Left lung (tissue), 14 donors: ENCODE measurements at regions of chr1 and their contacts with region 1.

Region 1: DNA sequence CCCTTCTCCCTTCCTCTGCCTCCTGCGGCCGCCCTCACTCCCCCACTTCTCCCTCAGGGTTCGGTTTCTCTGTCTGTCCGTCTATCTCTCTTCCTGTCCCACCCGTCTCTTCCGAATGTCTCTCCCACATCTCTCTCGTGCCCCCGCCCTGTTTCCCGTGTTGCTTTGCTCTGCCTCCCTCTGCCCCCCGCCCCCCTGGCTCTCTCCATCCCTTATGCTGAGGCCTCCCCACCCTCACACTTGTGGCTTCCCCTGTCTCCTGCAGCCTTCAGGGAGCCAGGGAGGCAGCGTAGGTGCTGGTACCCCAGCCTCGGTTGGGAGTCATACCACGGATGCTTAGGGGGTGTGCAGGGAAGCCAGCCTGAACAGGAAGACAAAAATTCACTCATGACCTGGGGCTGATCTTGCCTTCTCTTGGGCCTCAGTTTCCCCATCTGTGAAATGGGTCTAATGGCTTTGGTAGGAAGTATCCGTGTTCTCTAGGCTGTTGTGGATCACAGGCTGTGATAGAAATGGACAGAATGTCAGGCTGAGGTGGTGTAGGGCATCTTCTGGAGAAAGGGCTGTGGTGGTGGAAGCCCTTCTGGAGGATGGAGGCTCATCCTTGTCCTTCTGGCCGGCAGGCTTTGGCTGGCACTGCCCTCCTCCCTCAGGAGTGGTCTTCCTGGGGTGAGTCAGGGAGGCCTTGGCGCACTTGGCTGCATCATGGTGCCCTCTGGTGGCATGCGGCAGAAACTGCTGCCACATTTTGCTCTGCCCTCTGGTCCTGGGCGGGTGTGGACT is 55.5 kb downstream of the FOXO6 start:
- DNase-seq: peak; percentile 54 to 87 (median 68)
- ATAC-seq: peak; percentile 81
- H3K4me3 ChIP-seq: no peak overlapping the region
- H3K27ac ChIP-seq: no peak overlapping the region
- H3K4me1 ChIP-seq: peaks cover 7 to 9% of the 10 kb centered on the region in 2 donors
- H3K27me3 ChIP-seq: peaks cover 0 to under 1% of the 10 kb centered on the region in 2 donors
- CTCF ChIP-seq: peak; percentile 82 to 86

Region 2: GRCh38 chr1:41268154-41268770 is 148.5 kb before region 1 on chr1:
- intact Hi-C with region 1: loop called in 1 of 2 experiments (anchors 5 kb)
- DNase-seq: peak; percentile 63 to 93 (median 80)
- ATAC-seq: peak; percentile 97
- H3K4me3 ChIP-seq: no peak overlapping the region
- H3K27ac ChIP-seq: no peak overlapping the region
- H3K4me1 ChIP-seq: no peaks in the 10 kb centered on the region
- H3K27me3 ChIP-seq: no peaks in the 10 kb centered on the region
- CTCF ChIP-seq: peak; percentile 96 to 99

Region 3: DNA sequence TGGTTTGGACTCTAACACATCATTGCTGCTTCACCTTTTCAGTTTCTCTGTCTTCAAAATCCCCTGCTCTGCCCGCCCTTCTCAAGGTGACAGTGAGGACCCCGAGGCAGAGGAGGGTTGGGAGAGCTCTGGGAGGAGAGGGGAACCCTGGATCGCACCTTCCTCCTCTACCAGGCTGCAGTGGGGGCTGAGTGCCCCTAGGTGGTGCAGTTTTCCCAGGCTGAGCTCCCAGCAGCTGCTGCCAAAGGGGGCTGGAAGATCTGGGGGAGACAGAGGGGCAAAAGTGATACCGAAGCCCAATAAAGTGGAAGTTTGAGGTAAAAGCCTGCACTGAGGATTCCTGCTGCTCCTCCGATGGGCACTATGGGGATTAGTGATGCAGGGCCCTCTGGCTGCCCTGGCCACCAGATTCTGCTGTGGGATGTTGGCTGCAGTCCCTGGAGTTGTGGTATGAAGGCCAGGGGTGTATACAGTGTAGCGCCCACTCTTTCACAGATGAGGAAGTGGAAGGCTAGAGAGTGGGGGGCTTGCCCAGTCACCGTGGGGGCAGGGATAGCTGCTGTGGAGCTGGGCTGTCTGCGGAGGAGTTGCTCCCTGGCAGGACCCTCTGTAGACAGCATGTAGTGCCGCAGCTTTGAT is 133.9 kb before region 1 on chr1:
- intact Hi-C with region 1: loop called (anchors 5 to 10 kb)
- DNase-seq: peak in 2 of 4 donors; percentile 16 to 40
- ATAC-seq: peak; percentile 71
- H3K4me3 ChIP-seq: no peak overlapping the region
- H3K27ac ChIP-seq: no peak overlapping the region
- H3K4me1 ChIP-seq: peaks cover 7 to 16% of the 10 kb centered on the region in 2 donors
- H3K27me3 ChIP-seq: peaks cover 0 to 48% of the 10 kb centered on the region in 2 donors
- CTCF ChIP-seq: peak; percentile 55 to 68

Region 4: GRCh38 chr1:41913020-41913419 is 496.3 kb after region 1 on chr1:
- intact Hi-C with region 1: no loop called
- DNase-seq: no peak
- ATAC-seq: peak; percentile 57
- H3K4me3 ChIP-seq: no peak overlapping the region
- H3K27ac ChIP-seq: no peak overlapping the region
- H3K4me1 ChIP-seq: peaks cover 3 to 27% of the 10 kb centered on the region in 2 donors
- H3K27me3 ChIP-seq: peaks cover 0 to 11% of the 10 kb centered on the region in 2 donors
- CTCF ChIP-seq: no peak